ENCODE measurements at regions of chr9 and their contacts with region 1.

Region 1: GRCh38 chr9:97982683-97983588 is at the start of gene ANP32B:
- DNase-seq: peak; percentile 83 to 95 (median 88)
- H3K4me3 ChIP-seq: peak within 1 kb of the TSS; percentile 64 to 96 (median 89)
- H3K27ac ChIP-seq: peak within 1 kb of the TSS; percentile 80 to 100 (median 98)
- H3K27me3 ChIP-seq: no peaks in the 10 kb centered on the region
- CTCF ChIP-seq: peak; percentile 49 to 98 (median 80)
- total RNA-seq, gene ANP32B: 41.2 to 135 (median 66.8) TPM

Region 2: GRCh38 chr9:97696803-97697601 is 285.9 kb before region 1 on chr9 and contains the start of gene XPA:
- intact Hi-C with region 1: loop called (anchors 5 to 10 kb)
- DNase-seq: peak; percentile 89 to 98 (median 94)
- H3K4me3 ChIP-seq: peak within 1 kb of the TSS; percentile 64 to 99 (median 89)
- H3K27ac ChIP-seq: peak within 1 kb of the TSS; percentile 77 to 99 (median 94)
- H3K27me3 ChIP-seq: no peaks in the 10 kb centered on the region
- CTCF ChIP-seq: peak in 30 of 56 donors; percentile 12 to 56 (median 34)
- total RNA-seq, gene XPA: 12.5 to 32.8 (median 21.9) TPM

Region 3: DNA sequence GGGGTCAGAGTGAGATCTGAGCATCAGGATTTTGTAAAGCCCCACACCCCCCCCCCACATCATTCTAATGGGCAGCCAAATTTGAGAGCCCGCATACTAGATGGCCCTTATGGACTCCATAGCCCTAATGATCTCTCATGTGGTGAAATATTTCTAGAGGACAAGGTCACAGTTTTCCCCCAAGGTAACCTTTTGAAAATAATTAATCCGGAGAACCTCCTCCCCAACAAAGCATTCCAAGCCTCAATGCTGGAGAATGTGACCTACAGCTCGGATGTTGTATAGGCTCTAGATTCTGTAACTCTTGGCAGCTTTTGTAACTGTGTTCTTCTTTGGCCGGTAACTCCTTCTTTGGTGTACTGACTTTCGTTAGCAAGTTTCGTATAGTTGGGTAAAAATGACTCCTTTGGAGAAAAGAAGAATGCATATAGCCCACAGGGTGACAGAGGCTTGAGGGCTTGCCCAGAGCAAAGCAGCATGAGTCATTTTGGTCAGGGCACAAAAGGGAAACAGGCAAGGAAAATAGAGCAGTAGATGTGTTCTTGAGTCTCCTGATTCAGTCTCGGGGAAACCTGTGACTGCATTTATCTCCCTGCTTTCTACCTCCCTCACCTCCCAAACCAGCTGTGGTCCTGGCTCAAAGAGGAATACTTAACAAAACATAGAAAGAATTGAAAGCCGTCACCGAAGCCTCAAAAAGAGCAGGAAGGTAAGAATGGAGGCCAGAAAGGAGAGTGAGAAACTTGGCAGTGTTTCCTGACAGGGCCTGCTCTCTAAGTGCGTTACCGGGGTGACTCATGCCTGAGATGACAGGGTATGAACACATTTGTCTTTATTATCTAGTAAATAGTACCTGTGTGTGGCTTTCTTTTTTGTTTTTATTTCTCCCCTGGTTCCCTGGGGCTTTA is 279.2 kb before region 1 on chr9:
- intact Hi-C with region 1: loop called (anchors 5 to 10 kb)
- DNase-seq: no peak
- H3K4me3 ChIP-seq: no peak overlapping the region
- H3K27ac ChIP-seq: no peak overlapping the region
- H3K27me3 ChIP-seq: no peaks in the 10 kb centered on the region
- CTCF ChIP-seq: no peak

Region 4: DNA sequence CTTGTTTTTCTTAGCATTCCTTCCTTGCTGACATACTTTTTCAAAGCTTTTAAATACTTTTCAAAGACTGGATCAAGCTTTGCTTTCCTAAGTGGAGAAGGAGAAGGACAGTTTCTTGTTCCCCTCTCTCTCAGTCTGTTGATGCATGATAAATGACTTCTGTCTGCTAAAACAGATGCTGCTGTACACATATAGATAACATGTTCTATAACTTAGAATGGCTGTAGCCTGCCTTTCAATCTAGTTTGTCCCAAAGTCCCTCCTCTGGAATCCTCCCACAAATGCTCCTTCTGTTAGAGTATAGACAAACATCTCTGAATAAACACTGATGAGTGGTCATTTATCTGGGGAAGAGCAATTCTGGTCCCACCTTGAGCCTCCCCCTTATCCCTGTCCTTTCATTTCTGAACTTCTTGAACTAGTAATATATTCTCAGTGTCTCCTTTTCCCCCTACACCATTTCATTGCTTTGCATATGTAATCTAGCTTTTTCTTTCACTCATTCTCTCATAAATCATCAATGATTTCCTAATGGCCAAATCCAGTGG is 39.6 kb before region 1 on chr9:
- intact Hi-C with region 1: no loop called
- DNase-seq: no peak
- H3K4me3 ChIP-seq: no peak overlapping the region
- H3K27ac ChIP-seq: no peak overlapping the region
- H3K27me3 ChIP-seq: peaks cover 0 to 4% (median 0%) of the 10 kb centered on the region in 45 donors
- CTCF ChIP-seq: no peak

Region 5: DNA sequence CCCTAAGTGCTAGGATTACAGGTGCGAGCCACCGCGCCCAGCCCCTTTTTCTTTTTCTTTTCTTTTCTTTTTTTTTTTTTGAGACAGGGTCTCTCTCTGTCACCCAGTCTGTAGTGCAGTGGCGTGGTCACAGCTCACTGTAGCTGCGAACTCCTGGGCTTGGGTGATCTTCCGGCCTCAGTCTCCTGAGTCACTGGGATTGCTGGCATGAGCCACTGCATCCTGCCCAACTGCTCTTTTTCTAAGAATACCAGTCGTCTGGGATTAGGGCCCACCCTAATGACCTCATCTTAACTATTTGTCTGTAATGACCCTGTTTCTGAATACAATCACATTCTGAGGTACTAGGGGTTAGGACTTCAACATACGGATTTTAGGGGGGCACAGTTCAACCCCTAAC is 39.5 kb after region 1 on chr9:
- intact Hi-C with region 1: no loop called
- DNase-seq: no peak
- H3K4me3 ChIP-seq: no peak overlapping the region
- H3K27ac ChIP-seq: no peak overlapping the region
- H3K27me3 ChIP-seq: no peaks in the 10 kb centered on the region
- CTCF ChIP-seq: no peak

Region 6: GRCh38 chr9:98034593-98035546 is 51.9 kb after region 1 on chr9:
- intact Hi-C with region 1: loop called (anchors 5 kb)
- DNase-seq: peak; percentile 65 to 88 (median 76)
- H3K4me3 ChIP-seq: peak overlapping the region in 25 of 59 donors; percentile 6 to 47 (median 25)
- H3K27ac ChIP-seq: no peak overlapping the region
- H3K27me3 ChIP-seq: no peaks in the 10 kb centered on the region
- CTCF ChIP-seq: peak; percentile 57 to 93 (median 86)

Region 7: DNA sequence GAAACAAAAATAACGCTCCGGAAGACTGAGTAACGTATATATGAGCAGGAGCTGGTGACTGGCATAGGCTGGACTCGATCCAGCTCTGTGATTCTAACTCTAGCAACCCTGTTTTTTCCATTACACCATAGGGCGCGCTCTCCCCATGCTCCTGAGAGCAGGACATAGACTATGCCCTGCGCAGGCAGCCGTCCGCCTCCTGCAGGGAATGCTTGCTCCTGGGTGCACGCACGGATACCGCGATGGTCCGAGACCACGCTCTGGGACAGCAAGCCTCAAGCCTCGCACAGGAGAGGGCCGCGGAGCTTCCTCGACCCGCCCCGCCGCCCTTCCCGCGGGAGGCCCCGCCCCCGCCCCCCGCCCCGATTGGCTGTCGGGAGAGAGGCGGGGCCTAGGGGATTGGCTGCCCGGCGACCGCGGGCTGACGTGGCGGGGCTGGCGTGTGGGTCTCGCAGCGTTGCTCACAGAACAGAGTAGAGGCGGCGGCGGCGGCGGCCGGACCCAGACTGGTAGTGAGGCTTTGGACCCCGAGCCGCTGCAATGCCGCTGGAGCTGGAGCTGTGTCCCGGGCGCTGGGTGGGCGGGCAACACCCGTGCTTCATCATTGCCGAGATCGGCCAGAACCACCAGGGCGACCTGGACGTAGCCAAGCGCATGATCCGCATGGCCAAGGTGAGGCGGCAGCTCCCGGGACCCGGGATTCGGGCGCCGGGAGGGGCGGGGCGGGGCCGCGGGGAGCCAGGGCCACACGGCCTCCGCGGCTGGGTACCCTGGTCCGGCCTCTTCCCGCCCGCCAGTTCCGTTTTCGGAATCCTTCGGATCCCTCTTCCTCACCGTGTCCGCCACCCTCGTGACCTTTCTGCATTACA is 73.6 kb after region 1 on chr9 and contains the start of gene NANS:
- intact Hi-C with region 1: loop called (anchors 1 to 5 kb)
- DNase-seq: peak; percentile 86 to 96 (median 93)
- H3K4me3 ChIP-seq: peak within 1 kb of the TSS; percentile 69 to 99 (median 91)
- H3K27ac ChIP-seq: peak within 1 kb of the TSS in 57 of 59 donors; percentile 52 to 93 (median 85)
- H3K27me3 ChIP-seq: no peaks in the 10 kb centered on the region
- CTCF ChIP-seq: peak in 19 of 56 donors; percentile 4 to 53 (median 33)
- total RNA-seq, gene NANS: 13.8 to 40.0 (median 23.9) TPM